Activated naive CD4-positive, alpha-beta T cell treated with anti-CD3 and anti-CD28 coated beads for 36 hours (primary cell): ENCODE measurements at regions of chr19 and their contacts with region 1.

Region 1: DNA sequence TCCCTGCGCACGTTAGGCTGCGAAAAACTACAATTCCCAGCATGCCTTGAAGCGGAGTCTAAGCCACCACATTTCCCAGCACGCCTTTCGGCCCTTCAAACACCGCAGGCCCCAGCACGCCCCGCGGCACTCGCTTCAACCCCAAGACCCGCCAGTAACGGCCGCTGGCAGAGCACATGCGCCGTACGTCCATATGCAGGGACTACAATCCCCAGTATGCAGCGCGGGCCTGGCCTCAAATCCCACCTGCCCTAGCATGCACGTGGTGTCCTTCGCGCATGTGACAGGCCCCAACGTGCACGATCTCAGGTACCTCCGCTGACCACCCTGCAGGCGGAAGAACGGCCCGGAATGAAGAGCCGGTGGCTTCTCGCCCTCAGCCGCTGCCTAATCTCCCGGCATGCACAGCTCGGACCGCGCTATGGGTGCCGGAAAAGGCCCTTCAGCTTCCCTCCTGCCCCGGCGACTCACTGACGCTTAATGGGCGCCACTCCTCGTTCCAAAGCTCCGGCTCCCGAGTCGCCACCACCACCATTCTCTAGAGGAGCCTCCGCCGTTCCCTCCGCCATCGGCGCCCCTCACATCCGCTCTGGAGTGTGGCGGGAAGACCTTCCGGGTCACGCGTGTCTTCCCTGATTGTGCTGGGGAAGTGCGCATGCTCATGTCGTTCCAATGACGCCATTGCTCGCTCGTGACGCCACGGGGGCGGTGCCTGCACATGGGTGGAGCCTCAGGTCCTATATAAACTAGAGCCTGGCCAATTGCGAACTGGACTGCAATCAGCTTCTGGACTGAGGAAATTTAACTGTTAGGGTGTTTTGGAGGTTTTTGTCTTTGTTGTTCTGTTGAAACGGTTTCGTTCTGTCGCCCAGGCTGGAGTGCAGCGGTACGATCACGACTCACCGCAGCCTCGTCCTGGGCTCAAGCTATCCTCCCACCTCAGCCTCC is at the start of gene DUS3L:
- DNase-seq: peak; percentile 98
- H3K4me3 Mint-ChIP-seq: peak within 1 kb of the TSS; percentile 100
- H3K27ac Mint-ChIP-seq: peak within 1 kb of the TSS; percentile 100
- H3K4me1 Mint-ChIP-seq: peaks cover 13% of the 10 kb centered on the region
- H3K27me3 Mint-ChIP-seq: no peaks in the 10 kb centered on the region
- total RNA-seq, gene DUS3L: 43.1 to 45.2 TPM

Region 2: DNA sequence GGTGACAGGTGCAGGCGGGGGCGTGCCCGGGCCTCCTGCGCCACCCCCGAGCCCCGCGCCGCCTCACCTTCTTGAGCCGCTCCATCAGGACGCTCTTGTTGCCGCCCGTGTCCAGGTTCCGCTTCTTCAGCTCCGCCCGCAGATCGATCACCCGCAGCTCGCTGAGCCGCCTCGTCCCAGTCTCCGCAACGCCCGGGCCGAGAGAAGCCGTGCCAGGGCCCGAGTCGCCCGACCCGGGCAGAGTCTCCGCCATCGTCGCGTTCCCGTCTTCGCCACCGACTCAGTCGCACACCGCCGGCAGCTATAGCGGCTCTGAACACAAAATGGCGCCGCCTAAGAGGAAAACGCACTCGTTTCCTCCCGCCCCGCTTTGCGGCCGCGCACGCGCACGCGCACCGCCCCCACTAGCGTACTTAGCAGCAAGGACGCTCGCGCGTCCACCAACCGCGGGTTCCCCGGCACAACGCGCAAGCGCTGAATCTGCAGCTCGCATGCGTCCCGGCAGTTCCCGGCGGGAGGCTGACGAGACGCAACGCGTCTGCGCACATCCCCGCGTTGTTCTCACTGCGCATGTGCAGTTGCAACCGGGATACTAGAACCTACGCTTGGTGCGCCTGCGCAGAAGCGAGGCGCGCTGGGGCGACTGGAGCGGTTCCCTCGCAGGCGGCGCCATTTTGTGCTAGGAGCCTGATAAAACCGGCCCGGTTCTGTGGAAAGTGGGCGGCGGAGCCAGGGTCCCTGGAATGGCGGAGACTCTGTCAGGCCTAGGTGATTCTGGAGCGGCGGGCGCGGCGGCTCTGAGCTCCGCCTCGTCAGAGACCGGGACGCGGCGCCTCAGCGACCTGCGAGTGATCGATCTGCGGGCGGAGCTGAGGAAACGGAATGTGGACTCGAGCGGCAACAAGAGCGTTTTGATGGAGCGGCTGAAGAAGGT is 168.1 kb before region 1 on chr19 and contains the starts of genes SAFB and SAFB2:
- CTCF ChIA-PET with region 1: interaction called, 3 read pairs
- intact Hi-C with region 1: loop called (anchors 1 kb)
- DNase-seq: peak; percentile 99
- H3K4me3 Mint-ChIP-seq: peak within 1 kb of the TSS; percentile 100
- H3K27ac Mint-ChIP-seq: peak within 1 kb of the TSS; percentile 99
- H3K4me1 Mint-ChIP-seq: peaks cover 68% of the 10 kb centered on the region
- H3K27me3 Mint-ChIP-seq: no peaks in the 10 kb centered on the region
- total RNA-seq, gene SAFB: 120 to 129 TPM
- total RNA-seq, gene SAFB2: 108 to 118 TPM

Region 3: GRCh38 chr19:5690125-5690954 is 100.5 kb before region 1 on chr19 and contains the start of gene RPL36:
- CTCF ChIA-PET with region 1: interaction called, 7 read pairs
- intact Hi-C with region 1: loop called (anchors 1 kb)
- DNase-seq: peak; percentile 100
- H3K4me3 Mint-ChIP-seq: peak within 1 kb of the TSS; percentile 98
- H3K27ac Mint-ChIP-seq: peak within 1 kb of the TSS; percentile 96
- H3K4me1 Mint-ChIP-seq: peaks cover 22% of the 10 kb centered on the region
- H3K27me3 Mint-ChIP-seq: no peaks in the 10 kb centered on the region
- total RNA-seq, gene RPL36: 1,916 to 2,003 TPM

Region 4: DNA sequence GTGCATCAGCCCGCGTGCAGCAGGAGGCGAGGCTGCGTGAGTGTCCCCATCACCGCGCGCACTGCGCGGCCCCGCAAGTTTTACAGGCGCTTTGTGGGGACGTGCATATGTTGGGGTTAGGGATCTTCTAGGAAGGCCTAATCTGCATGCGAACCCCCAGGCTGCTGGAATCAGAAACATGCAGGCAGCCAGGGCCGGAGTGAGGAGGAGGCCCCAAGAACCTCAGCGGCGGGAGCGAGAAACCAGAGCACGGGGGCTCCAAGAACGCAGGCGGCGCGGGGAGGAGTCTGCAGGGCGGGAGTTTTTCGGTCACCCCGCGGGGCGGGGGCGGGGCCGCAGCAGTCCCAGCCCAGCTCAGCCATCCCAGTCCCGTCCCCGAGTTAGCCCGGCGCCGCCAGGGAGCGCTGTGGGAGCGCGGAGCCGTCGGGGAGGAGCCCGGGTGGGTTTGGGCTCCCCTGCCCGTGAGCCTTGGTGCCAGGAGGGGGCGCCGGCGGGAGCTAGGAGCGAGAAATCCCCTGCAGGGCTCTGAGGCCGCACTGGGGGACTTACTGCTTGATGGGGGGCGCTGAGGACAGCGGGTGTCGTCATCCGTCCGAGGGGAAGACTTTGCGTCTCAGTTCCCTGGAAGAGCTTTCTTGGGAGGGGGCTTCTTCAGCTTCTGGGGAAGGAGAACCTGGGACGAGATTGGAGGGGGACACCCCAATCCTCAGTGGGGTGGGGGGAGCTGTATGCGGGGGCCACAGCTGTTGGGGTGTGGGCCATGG is 13.1 kb after region 1 on chr19:
- CTCF ChIA-PET with region 1: interaction called, 17 read pairs
- intact Hi-C with region 1: no loop called
- DNase-seq: peak; percentile 96
- H3K4me3 Mint-ChIP-seq: peak overlapping the region; percentile 70
- H3K27ac Mint-ChIP-seq: no peak overlapping the region
- H3K4me1 Mint-ChIP-seq: peaks cover 25% of the 10 kb centered on the region
- H3K27me3 Mint-ChIP-seq: peaks cover 19% of the 10 kb centered on the region

Region 5: DNA sequence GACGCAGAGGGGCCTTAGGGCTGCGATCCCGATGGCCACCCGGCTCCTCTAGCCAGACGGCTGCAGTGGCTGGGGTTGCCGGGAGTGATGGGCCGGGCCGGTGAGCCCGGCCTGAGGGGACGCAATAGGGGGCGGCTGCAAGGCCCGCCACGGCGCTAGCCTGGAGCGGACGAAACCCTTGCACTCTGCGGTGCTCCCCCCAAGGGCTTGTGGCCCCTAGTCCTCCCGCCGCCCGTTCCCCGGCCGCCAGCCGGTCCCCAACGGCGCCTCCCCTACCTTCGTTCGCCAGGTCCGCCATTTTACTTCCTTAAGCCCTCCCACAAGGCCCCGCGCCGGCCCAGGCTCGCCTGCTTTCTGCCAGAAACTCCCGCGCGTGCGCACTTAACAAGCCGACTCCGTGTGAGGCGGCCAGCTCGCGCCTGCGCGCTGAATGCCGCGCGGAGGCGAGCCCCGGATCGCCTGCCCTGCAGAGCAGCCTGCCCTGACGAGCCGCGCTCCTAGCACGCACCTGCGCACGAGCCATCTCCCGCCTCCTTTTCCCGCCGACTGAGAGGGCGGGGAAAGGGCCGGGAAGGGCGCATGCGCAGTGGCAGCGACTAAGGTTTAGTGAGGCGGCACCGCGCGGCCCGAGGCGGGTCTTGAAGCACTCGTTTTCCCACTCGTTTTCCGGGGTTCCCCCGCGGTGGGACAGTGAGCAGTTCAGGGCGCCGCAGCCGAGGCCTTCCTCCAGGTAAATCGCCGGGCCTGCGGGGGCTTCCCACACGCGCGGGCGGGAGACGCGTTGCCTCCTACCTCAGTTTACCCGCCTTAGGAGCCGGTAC is 187.1 kb after region 1 on chr19 and contains the start of gene RANBP3:
- CTCF ChIA-PET with region 1: no interaction called
- intact Hi-C with region 1: loop called (anchors 5 kb)
- DNase-seq: peak; percentile 98
- H3K4me3 Mint-ChIP-seq: peak within 1 kb of the TSS; percentile 98
- H3K27ac Mint-ChIP-seq: peak within 1 kb of the TSS; percentile 95
- H3K4me1 Mint-ChIP-seq: peaks cover 59% of the 10 kb centered on the region
- H3K27me3 Mint-ChIP-seq: no peaks in the 10 kb centered on the region
- total RNA-seq, gene RANBP3: 77.9 to 80.5 TPM

Region 6: DNA sequence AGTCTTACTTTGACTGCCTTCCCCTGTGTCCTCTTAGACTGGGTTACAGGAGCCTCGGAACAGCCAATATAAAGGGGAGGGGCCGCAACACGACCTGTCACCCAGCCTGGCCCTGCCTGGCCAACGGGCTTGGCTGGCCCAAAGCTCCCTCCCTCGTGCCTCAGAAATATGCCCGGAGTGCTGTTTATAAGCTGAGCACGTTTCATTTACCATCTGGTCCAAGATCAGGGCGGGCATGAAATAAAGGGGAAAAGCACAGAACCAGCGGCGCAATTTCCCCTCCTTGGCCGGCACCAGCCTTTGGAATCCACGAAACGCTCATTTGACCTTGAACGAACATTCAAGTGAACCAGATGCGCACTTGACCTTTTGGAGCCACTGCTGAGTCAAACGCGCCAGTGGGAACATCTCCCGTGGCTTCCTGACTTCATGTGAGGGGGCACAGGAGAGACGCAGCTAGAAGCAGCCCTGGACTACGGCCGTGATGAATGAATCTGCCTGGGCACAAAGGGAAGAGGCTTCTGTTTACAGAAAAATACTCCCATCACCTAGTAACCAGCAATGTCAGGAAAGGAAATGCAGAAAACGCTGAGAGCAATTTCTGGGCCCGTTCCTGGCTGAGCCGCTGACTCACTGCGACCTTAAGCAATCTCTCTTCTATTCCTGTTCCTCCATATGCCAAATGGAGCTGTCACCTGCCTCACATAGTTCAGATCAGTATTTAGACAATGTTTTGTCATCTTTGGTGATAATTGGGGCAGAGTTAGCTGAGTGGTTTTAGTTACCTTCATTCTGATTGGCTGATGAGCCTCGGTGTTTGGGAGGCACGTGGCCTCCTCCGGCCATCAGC is 266.2 kb after region 1 on chr19:
- CTCF ChIA-PET with region 1: no interaction called
- intact Hi-C with region 1: no loop called
- DNase-seq: peak; percentile 26
- H3K4me3 Mint-ChIP-seq: no peak overlapping the region
- H3K27ac Mint-ChIP-seq: no peak overlapping the region
- H3K4me1 Mint-ChIP-seq: peaks cover 20% of the 10 kb centered on the region
- H3K27me3 Mint-ChIP-seq: no peaks in the 10 kb centered on the region

Region 7: DNA sequence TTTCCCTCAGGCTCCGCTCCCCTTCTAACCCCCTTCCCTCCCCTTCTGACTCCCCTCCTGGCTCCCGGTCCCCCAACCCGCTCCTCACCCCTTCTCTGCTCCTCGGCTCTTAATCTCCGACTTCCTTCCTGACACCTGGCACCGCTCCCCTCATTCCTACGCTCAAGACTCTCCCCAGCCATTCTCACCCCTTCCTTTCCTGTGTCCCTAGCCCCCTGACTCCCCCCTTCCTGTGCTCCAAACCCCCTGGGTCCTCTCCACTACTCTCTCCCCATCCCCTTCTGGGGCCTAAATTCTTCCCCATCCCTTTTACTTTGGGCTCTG is 571.1 kb after region 1 on chr19:
- CTCF ChIA-PET with region 1: no interaction called
- intact Hi-C with region 1: loop called (anchors 2 kb)
- DNase-seq: no peak
- H3K4me3 Mint-ChIP-seq: peak overlapping the region; percentile 98
- H3K27ac Mint-ChIP-seq: peak overlapping the region; percentile 95
- H3K4me1 Mint-ChIP-seq: peaks cover 17% of the 10 kb centered on the region
- H3K27me3 Mint-ChIP-seq: no peaks in the 10 kb centered on the region